ENCODE measurements at regions of chr1 and their contacts with region 1.

Region 1: GRCh38 chr1:39799770-39800470 is 11.3 kb upstream of the BMP8B start:
- DNase-seq: peak; percentile 78
- ATAC-seq: peak; percentile 65
- H3K4me3 Mint-ChIP-seq: peak overlapping the region; percentile 54
- H3K27ac Mint-ChIP-seq: peak overlapping the region; percentile 85
- H3K4me1 Mint-ChIP-seq: peaks cover 9% of the 10 kb centered on the region
- H3K27me3 Mint-ChIP-seq: no peaks in the 10 kb centered on the region

Region 2: GRCh38 chr1:39738622-39739366 is 61.1 kb before region 1 on chr1 and contains the start of gene PPIE:
- POLR2A ChIA-PET with region 1: interaction called, 17 read pairs
- DNase-seq: peak; percentile 91
- ATAC-seq: peak; percentile 96
- H3K4me3 Mint-ChIP-seq: peak within 1 kb of the TSS; percentile 95
- H3K27ac Mint-ChIP-seq: peak within 1 kb of the TSS; percentile 93
- H3K4me1 Mint-ChIP-seq: peaks cover 39% of the 10 kb centered on the region
- H3K27me3 Mint-ChIP-seq: peaks cover 11% of the 10 kb centered on the region
- total RNA-seq, gene PPIE: 70.8 to 73.5 TPM

Measured in activated naive CD8-positive, alpha-beta T cell treated with anti-CD3 and anti-CD28 coated beads, Interleukin-2, amount 10 ng/mL, durations not matched to agents 7 days and 5 days (primary cell).